Activated CD4-positive, alpha-beta T cell treated with anti-CD3 and anti-CD28 coated beads for 36 hours (primary cell): ENCODE measurements at regions of chr17 and their contacts with region 1.

Region 1: GRCh38 chr17:2672026-2672425 is 39.5 kb downstream of the CLUH start:
- DNase-seq: no peak
- ATAC-seq: no peak
- H3K4me3 Mint-ChIP-seq: no peak overlapping the region
- H3K27ac Mint-ChIP-seq: no peak overlapping the region
- H3K4me1 Mint-ChIP-seq: peaks cover 6% of the 10 kb centered on the region
- H3K27me3 Mint-ChIP-seq: no peaks in the 10 kb centered on the region

Region 2: DNA sequence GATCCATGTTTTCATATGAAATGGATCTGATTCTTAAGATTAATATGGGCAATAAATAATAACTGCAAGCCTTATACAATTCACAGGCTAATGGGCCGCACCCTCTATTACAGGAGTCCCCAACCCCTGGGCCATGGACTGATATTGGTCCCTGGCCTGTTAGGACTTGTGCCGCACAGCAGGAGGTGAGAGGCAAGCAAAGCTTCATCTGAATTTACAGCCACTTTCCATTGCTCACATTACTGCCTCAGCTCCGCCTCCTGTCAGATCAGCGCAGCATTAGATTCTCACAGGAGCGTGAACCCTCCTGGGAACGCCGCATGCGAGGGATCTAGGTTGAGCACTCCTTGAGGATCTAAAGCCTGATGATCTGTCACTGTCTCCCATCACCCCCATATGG is 187.2 kb before region 1 on chr17:
- CTCF ChIA-PET with region 1: no interaction called
- POLR2A ChIA-PET with region 1: no interaction called
- intact Hi-C with region 1: loop called in 1 of 2 experiments (anchors 10 kb)
- DNase-seq: no peak
- ATAC-seq: no peak
- H3K4me3 Mint-ChIP-seq: no peak overlapping the region
- H3K27ac Mint-ChIP-seq: no peak overlapping the region
- H3K4me1 Mint-ChIP-seq: peaks cover 45% of the 10 kb centered on the region
- H3K27me3 Mint-ChIP-seq: no peaks in the 10 kb centered on the region

Region 3: GRCh38 chr17:2511462-2512369 is 160.3 kb before region 1 on chr17 and contains the start of gene METTL16:
- CTCF ChIA-PET with region 1: interaction called, 3 read pairs
- POLR2A ChIA-PET with region 1: no interaction called
- intact Hi-C with region 1: loop called (anchors 1 to 10 kb)
- DNase-seq: peak; percentile 100
- ATAC-seq: peak; percentile 99
- H3K4me3 Mint-ChIP-seq: no peak within 1 kb of the TSS
- H3K27ac Mint-ChIP-seq: no peak within 1 kb of the TSS
- H3K4me1 Mint-ChIP-seq: peaks cover 17% of the 10 kb centered on the region
- H3K27me3 Mint-ChIP-seq: no peaks in the 10 kb centered on the region
- total RNA-seq, gene METTL16: 50.1 to 61.6 TPM

Region 4: DNA sequence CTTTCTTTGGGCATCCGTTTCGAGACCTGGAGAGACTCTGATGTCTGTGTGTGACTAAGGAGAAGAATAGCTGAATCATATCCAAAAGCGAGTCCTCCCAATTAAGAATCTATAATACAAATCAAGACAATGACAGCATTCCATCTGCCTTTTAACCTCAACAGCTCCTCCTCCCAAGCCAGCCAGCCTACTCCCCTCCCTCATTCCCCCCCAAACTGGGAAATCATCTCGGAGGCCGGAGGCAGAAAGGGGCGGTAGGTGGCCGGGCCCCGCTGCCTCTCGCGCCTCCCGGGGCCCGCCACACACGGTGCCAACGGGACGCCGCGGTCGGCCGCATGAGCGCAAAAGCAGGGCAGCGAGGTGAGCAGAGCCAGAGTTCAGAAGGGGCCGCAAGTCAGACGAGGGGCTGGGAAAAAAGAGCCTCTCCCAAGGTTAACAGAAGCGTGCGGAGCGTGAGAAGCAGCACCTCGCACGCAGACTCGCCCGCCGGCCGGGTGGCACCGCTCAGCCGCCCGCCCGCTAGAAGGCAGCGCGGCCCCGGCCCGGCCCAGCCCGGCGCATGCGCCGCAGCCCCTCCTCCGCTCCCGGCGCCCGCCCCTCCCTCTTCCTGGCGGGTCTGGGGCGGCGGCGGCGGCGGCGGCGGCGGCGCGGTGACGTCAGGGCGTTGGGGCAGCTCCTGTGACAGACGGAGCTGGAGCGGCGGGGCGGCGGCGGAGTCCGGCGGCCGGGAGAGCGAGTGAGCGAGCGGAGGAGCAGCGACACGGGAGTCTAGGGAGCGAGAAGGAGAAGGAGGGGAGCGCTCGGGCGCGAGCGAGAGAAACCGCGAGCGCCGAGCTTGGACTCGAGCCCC is 78.8 kb before region 1 on chr17 and contains the start of gene PAFAH1B1:
- CTCF ChIA-PET with region 1: interaction called, 4 read pairs
- POLR2A ChIA-PET with region 1: no interaction called
- intact Hi-C with region 1: loop called (anchors 1 kb)
- DNase-seq: peak; percentile 98
- ATAC-seq: peak; percentile 84
- H3K4me3 Mint-ChIP-seq: peak within 1 kb of the TSS; percentile 79
- H3K27ac Mint-ChIP-seq: peak within 1 kb of the TSS; percentile 88
- H3K4me1 Mint-ChIP-seq: peaks cover 25% of the 10 kb centered on the region
- H3K27me3 Mint-ChIP-seq: no peaks in the 10 kb centered on the region
- total RNA-seq, gene PAFAH1B1: 163 to 167 TPM